ENCODE measurements at regions of chr4 and their contacts with region 1.

Region 1: DNA sequence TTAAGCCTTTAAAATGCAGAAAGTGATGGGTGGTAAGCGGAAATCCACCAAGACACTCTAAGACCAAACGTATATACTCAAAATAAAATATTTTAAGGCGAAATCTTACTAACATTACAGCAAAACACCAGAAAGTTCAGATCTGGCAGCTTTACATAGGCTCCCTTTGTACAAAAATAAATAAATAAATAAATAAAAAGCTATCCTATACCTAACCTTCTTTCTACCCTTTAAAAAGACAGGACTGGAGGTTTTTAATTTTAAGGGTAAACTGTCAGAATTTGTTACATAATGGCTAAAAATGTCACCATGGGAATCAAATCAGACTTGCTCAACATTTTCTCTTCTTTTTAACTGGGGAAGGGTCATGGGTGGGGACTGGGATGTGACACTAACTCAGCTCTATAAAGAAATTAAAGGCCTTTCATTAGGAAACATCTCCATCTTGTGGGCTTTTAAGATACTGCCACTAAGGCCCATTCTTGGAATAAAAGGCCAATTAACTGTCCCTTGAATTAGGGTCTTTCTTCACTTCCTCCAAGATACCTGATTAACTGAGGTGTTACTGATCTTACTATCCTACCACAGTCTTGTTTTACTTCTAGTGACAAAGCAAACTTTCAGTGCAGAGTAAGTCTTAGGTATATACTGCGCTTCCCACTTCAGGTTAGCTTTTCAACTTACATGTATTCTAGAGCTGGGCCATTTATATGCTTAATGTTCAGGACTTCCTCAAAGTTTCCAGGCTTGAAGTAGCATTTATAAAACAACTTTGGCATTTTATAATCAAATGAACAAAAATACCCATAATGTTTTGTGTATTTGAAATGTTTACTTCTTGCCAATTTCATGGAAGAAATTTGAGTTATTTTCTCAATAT is 13.3 kb downstream of the HNRNPD start:
- DNase-seq: no peak
- ATAC-seq: peak; percentile 75
- H3K4me3 Mint-ChIP-seq: no peak overlapping the region
- H3K27ac Mint-ChIP-seq: peak overlapping the region; percentile 6
- H3K4me1 Mint-ChIP-seq: peaks cover 69% of the 10 kb centered on the region
- H3K27me3 Mint-ChIP-seq: no peaks in the 10 kb centered on the region
- CTCF ChIP-seq: peak; percentile 38

Region 2: DNA sequence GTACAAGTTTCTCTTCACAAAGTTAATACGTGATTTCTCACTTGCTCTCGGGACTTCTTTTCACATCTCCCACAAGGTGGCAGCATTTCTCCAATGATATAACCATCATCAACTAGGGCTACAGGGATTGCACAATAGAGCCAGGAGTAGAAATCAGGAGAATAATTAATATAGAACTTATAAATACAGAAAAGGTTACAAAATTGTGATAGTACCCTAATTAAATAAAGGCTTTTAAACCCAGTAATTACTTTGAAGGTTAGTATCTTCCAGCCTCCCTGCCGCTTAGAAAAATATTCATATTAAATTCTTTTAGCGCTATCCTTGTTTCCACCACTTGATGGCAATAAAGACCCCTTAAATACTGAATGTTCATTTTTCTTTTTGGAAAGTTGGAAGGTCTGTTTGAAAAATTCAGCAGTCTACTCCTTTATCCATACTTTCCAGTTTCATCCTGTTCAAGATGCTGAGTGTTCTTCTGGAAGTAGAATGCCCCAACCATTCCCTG is 954.6 kb before region 1 on chr4:
- CTCF ChIA-PET with region 1: interaction called, 5 read pairs
- POLR2A ChIA-PET with region 1: no interaction called
- intact Hi-C with region 1: loop called (anchors 1 kb)
- DNase-seq: no peak
- ATAC-seq: peak; percentile 81
- H3K4me3 Mint-ChIP-seq: no peak overlapping the region
- H3K27ac Mint-ChIP-seq: no peak overlapping the region
- H3K4me1 Mint-ChIP-seq: peaks cover 3% of the 10 kb centered on the region
- H3K27me3 Mint-ChIP-seq: peaks cover 3% of the 10 kb centered on the region
- CTCF ChIP-seq: peak; percentile 93

Region 3: DNA sequence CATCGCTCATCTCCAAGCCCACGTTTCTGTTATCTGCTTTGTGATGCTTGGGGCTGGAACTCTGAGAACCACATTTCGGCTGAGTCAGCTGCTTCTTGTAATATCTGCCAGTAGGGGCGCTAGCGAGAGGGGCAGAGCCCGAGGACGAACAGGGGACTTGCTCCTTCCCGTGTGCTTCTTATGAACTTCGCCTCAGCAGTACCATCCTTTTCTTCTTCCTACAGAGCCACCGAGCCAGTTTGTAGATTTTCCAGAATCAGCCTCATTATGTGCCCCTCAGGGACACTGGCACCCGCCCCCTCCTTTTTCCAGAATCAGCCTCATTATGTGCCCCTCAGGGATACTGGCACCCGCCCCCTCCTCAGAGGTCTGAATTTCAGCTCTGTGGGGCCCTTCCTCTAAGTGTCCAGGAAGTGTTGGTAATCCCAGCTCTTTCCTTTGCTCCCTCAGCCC is 447.1 kb before region 1 on chr4:
- CTCF ChIA-PET with region 1: interaction called, 3 read pairs
- POLR2A ChIA-PET with region 1: no interaction called
- intact Hi-C with region 1: loop called (anchors 5 kb)
- DNase-seq: peak; percentile 20
- ATAC-seq: peak; percentile 62
- H3K4me3 Mint-ChIP-seq: no peak overlapping the region
- H3K27ac Mint-ChIP-seq: no peak overlapping the region
- H3K4me1 Mint-ChIP-seq: peaks cover 3% of the 10 kb centered on the region
- H3K27me3 Mint-ChIP-seq: peaks cover 11% of the 10 kb centered on the region
- CTCF ChIP-seq: peak; percentile 17

Region 4: GRCh38 chr4:82201805-82202641 is 158.5 kb before region 1 on chr4:
- CTCF ChIA-PET with region 1: interaction called, 15 read pairs
- POLR2A ChIA-PET with region 1: no interaction called
- intact Hi-C with region 1: loop called (anchors 1 kb)
- DNase-seq: no peak
- ATAC-seq: peak; percentile 50
- H3K4me3 Mint-ChIP-seq: no peak overlapping the region
- H3K27ac Mint-ChIP-seq: no peak overlapping the region
- H3K4me1 Mint-ChIP-seq: no peaks in the 10 kb centered on the region
- H3K27me3 Mint-ChIP-seq: peaks cover 16% of the 10 kb centered on the region
- CTCF ChIP-seq: no peak

Region 5: GRCh38 chr4:82275431-82276331 is 84.9 kb before region 1 on chr4:
- CTCF ChIA-PET with region 1: interaction called, 19 read pairs
- POLR2A ChIA-PET with region 1: interaction called, 3 read pairs
- intact Hi-C with region 1: loop called (anchors 1 kb)
- DNase-seq: no peak
- ATAC-seq: peak; percentile 49
- H3K4me3 Mint-ChIP-seq: peak overlapping the region; percentile 63
- H3K27ac Mint-ChIP-seq: peak overlapping the region; percentile 72
- H3K4me1 Mint-ChIP-seq: peaks cover 52% of the 10 kb centered on the region
- H3K27me3 Mint-ChIP-seq: no peaks in the 10 kb centered on the region
- CTCF ChIP-seq: no peak

Region 6: DNA sequence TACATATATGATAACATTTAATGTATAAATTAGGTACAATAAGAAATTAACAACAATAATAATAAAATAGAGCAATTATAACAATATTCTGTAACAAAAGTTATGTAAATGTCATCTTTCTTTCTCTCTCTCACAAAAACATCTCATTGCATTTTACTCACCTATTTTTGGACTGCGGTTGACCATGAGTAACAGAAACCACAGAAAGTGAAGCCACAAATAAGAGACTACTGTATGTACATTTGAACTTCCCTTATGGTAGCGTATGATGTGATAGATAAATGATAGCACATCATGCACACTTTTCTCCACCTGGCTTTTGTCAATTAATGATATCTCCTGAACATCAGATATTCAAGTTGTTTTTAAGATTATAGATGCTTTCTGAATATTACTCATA is 67.2 kb before region 1 on chr4:
- CTCF ChIA-PET with region 1: no interaction called
- POLR2A ChIA-PET with region 1: no interaction called
- intact Hi-C with region 1: loop called (anchors 2 kb)
- DNase-seq: no peak
- ATAC-seq: peak; percentile 94
- H3K4me3 Mint-ChIP-seq: peak overlapping the region; percentile 70
- H3K27ac Mint-ChIP-seq: peak overlapping the region; percentile 67
- H3K4me1 Mint-ChIP-seq: peaks cover 28% of the 10 kb centered on the region
- H3K27me3 Mint-ChIP-seq: no peaks in the 10 kb centered on the region
- CTCF ChIP-seq: no peak

Region 7: GRCh38 chr4:82458729-82459128 is 98.2 kb after region 1 on chr4:
- CTCF ChIA-PET with region 1: no interaction called
- POLR2A ChIA-PET with region 1: no interaction called
- intact Hi-C with region 1: no loop called
- DNase-seq: no peak
- ATAC-seq: no peak
- H3K4me3 Mint-ChIP-seq: no peak overlapping the region
- H3K27ac Mint-ChIP-seq: no peak overlapping the region
- H3K4me1 Mint-ChIP-seq: peaks cover 4% of the 10 kb centered on the region
- H3K27me3 Mint-ChIP-seq: no peaks in the 10 kb centered on the region
- CTCF ChIP-seq: no peak